Activated CD4-positive, alpha-beta T cell treated with anti-CD3 and anti-CD28 coated beads, Interleukin-2, amount 10 ng/mL, durations not matched to agents 24 days and 14 days (primary cell): ENCODE measurements at regions of chr11 and their contacts with region 1.

Region 1: GRCh38 chr11:128488471-128488870 is 98.9 kb downstream of the ETS1 start:
- DNase-seq: no peak
- H3K4me3 Mint-ChIP-seq: peak overlapping the region; percentile 70
- H3K27ac Mint-ChIP-seq: peak overlapping the region; percentile 95
- H3K4me1 Mint-ChIP-seq: peaks cover 92% of the 10 kb centered on the region
- H3K27me3 Mint-ChIP-seq: no peaks in the 10 kb centered on the region

Region 2: DNA sequence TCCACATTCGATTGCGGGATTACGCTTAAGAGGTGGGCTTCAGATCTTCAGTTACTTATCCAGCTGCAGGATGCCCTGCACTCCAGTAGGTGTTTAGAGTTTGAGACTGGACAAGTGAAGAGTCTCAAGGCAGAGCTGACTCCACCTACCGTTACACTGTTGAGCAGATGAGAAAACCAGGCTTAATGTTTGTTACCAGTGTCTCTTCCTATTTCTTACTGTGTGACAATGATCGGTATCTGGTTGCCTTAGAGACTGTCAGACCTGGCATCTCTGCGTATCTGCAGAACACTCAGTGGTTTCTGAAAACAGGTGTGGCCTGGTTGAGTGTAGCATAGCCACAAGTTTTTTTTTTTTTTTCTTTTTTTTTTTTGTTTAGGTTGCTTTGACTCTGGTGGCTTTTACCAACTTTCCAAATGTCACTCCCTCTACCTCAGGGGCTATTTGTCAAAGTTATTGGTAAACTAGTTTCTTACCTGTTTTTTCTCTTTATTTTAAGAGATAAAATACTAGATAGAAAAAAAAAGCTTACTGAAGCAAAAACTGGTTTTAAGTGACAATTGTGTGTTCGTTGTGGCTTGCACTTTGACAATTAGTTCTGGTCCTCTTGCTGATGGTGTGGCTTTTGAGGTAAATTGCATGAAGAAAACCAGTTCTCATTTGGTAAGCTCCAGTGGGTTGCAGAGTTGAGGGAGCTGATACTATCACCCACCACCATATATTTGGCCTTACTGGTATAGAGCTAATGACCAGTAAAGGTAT is 185.9 kb before region 1 on chr11:
- intact Hi-C with region 1: loop called (anchors 5 kb)
- DNase-seq: peak; percentile 94
- H3K4me3 Mint-ChIP-seq: peak overlapping the region; percentile 81
- H3K27ac Mint-ChIP-seq: peak overlapping the region; percentile 93
- H3K4me1 Mint-ChIP-seq: peaks cover 70% of the 10 kb centered on the region
- H3K27me3 Mint-ChIP-seq: no peaks in the 10 kb centered on the region

Region 3: GRCh38 chr11:128342511-128343134 is 145.8 kb before region 1 on chr11:
- intact Hi-C with region 1: no loop called
- DNase-seq: peak; percentile 90
- H3K4me3 Mint-ChIP-seq: peak overlapping the region; percentile 24
- H3K27ac Mint-ChIP-seq: peak overlapping the region; percentile 88
- H3K4me1 Mint-ChIP-seq: peaks cover 79% of the 10 kb centered on the region
- H3K27me3 Mint-ChIP-seq: no peaks in the 10 kb centered on the region

Region 4: GRCh38 chr11:128506999-128507611 is 18.6 kb after region 1 on chr11:
- intact Hi-C with region 1: loop called (anchors 2 kb)
- DNase-seq: peak; percentile 78
- H3K4me3 Mint-ChIP-seq: peak overlapping the region; percentile 93
- H3K27ac Mint-ChIP-seq: peak overlapping the region; percentile 98
- H3K4me1 Mint-ChIP-seq: peaks cover 93% of the 10 kb centered on the region
- H3K27me3 Mint-ChIP-seq: no peaks in the 10 kb centered on the region